Activated CD4-positive, alpha-beta T cell treated with anti-CD3 and anti-CD28 coated beads, Interleukin-2, amount 10 ng/mL, durations not matched to agents 24 days and 14 days (primary cell): ENCODE measurements at regions of chr1 and their contacts with region 1.

Region 1: GRCh38 chr1:212994926-212995325 is 20.7 kb downstream of the ANGEL2 start:
- DNase-seq: no peak
- H3K4me3 Mint-ChIP-seq: no peak overlapping the region
- H3K27ac Mint-ChIP-seq: no peak overlapping the region
- H3K4me1 Mint-ChIP-seq: peaks cover 2% of the 10 kb centered on the region
- H3K27me3 Mint-ChIP-seq: no peaks in the 10 kb centered on the region

Region 2: GRCh38 chr1:212665241-212666115 is 329.4 kb before region 1 on chr1:
- intact Hi-C with region 1: loop called (anchors 1 kb)
- DNase-seq: peak; percentile 94
- H3K4me3 Mint-ChIP-seq: peak overlapping the region; percentile 76
- H3K27ac Mint-ChIP-seq: peak overlapping the region; percentile 66
- H3K4me1 Mint-ChIP-seq: peaks cover 27% of the 10 kb centered on the region
- H3K27me3 Mint-ChIP-seq: peaks cover 24% of the 10 kb centered on the region

Region 3: GRCh38 chr1:212791676-212792395 is 203.1 kb before region 1 on chr1 and contains the starts of genes NSL1 and TATDN3:
- intact Hi-C with region 1: loop called (anchors 1 kb)
- DNase-seq: peak; percentile 99
- H3K4me3 Mint-ChIP-seq: peak within 1 kb of the TSS; percentile 93
- H3K27ac Mint-ChIP-seq: peak within 1 kb of the TSS; percentile 96
- H3K4me1 Mint-ChIP-seq: peaks cover 26% of the 10 kb centered on the region
- H3K27me3 Mint-ChIP-seq: no peaks in the 10 kb centered on the region
- total RNA-seq, gene NSL1: 37.3 and 40.0 TPM in 2 replicates
- total RNA-seq, gene TATDN3: 15.1 and 16.2 TPM in 2 replicates

Region 4: DNA sequence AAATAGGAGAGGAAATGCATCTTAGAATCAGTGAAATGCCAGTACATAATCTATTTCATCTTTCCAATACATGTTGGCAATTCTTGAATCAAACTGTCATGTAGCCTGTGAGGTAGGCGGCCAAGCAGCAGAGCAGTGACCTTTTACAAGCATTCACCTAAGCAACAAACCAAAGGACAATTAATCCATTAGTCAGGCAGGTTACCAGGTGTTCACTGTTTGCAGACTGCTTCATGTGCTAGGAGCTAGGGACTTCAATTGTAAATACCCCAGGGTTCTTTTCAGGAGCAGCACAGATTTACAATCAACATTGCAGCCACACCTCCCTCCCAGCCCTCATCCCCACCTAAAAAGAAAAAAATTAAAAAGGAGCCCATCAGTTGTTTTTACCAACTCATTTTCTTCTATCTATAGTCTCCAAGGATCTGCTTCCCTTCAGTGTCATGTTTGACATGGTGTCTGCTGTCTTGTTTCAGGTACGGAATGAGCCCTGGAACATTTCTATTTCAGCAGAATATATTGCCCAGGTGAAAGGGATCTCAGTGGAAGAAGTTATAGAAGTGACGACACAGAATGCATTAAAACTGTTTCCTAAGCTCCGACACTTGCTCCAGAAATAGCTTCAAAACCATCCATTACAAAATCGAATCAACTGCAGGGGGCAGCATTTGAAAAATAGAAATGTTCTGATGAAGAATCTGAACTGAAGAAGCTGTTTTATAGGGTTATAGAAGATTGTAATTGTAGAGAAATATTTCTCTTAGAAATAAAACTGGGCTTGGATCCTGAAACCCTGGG is 180.2 kb before region 1 on chr1:
- intact Hi-C with region 1: loop called (anchors 1 kb)
- DNase-seq: peak; percentile 65
- H3K4me3 Mint-ChIP-seq: no peak overlapping the region
- H3K27ac Mint-ChIP-seq: no peak overlapping the region
- H3K4me1 Mint-ChIP-seq: peaks cover 2% of the 10 kb centered on the region
- H3K27me3 Mint-ChIP-seq: no peaks in the 10 kb centered on the region